ENCODE measurements at regions of chr1 and their contacts with region 1.

Region 1: GRCh38 chr1:33610864-33611455 is 138.5 kb downstream of the ZSCAN20 start:
- DNase-seq: no peak
- H3K4me3 ChIP-seq: no peak overlapping the region
- H3K27ac ChIP-seq: no peak overlapping the region
- H3K4me1 ChIP-seq: no peaks in the 10 kb centered on the region
- H3K27me3 ChIP-seq: peaks cover 0 to 14% (median 0%) of the 10 kb centered on the region in 3 donors
- CTCF ChIP-seq: no peak
- EP300 ChIP-seq: no peak
- POLR2A ChIP-seq: no peak

Region 2: DNA sequence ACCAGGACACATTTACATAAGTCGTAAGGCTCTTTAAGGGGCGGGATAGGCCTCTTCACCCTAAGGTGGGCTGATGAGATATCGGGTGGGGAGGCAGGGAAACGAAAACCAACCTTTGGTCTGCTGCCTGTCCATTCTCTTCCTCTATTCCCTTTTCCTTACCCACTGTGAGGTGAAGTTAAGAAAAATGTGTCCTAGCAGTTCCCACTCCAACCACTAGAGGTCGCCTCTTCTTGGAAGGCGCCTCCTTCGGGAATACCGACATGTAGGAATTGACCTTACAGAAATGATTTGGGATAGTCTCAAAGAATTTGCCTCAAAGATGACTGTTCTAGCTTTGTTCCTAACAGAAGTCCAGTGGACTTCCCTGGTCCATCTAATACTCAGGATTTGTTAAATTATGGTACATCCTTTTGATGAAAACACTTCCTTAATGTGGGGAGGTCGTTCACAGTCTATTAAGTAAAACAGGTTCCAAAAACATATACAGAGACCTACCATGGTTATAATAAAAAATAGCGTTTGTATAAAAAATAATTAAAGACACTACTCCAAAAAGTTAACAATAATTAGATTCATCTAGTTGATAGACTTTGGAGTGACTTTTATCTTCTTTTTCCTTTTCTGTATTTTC is 515.9 kb before region 1 on chr1:
- intact Hi-C with region 1: loop called (anchors 5 kb)
- DNase-seq: peak; percentile 74
- H3K4me3 ChIP-seq: no peak overlapping the region
- H3K27ac ChIP-seq: no peak overlapping the region
- H3K4me1 ChIP-seq: no peaks in the 10 kb centered on the region
- H3K27me3 ChIP-seq: no peaks in the 10 kb centered on the region
- CTCF ChIP-seq: peak; percentile 76 to 98 (median 85)
- EP300 ChIP-seq: no peak
- POLR2A ChIP-seq: no peak